ENCODE measurements at regions of chr15 and their contacts with region 1.

Region 1: GRCh38 chr15:61186905-61187741 is 42.0 kb downstream of the RORA start:
- DNase-seq: peak; percentile 47 to 77
- ATAC-seq: peak; percentile 58 to 85 (median 74)
- H3K4me3 ChIP-seq: peak overlapping the region; percentile 54
- H3K27ac ChIP-seq: peak overlapping the region; percentile 72
- H3K4me1 ChIP-seq: peaks cover 41% of the 10 kb centered on the region
- H3K27me3 ChIP-seq: no peaks in the 10 kb centered on the region
- CTCF ChIP-seq: no peak

Region 2: GRCh38 chr15:61227269-61227949 is 40.3 kb after region 1 on chr15:
- intact Hi-C with region 1: loop called in 1 of 2 experiments (anchors 5 kb)
- DNase-seq: peak; percentile 24 to 57
- ATAC-seq: peak; percentile 32 to 77 (median 75)
- H3K4me3 ChIP-seq: peak overlapping the region; percentile 75
- H3K27ac ChIP-seq: peak overlapping the region; percentile 87
- H3K4me1 ChIP-seq: peaks cover 30% of the 10 kb centered on the region
- H3K27me3 ChIP-seq: no peaks in the 10 kb centered on the region
- CTCF ChIP-seq: no peak

Region 3: DNA sequence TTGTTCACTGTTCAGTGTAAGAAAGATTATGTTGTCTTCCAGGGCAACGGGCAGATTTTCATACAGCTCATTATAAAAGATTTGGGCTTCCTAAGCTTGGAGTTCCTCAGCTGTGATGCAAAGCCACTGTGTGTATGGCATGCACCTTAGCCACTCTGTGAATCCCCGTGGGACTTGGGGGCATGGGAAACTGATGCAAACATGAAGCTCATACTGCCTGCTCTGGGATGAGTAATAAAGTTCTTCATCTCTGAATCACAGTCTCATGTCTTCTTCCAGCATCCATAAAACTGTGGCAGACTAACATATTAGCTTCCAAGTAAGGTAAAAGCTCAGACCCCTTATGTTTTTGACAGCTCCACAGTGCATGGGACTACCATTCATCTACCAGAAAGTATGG is 196.3 kb after region 1 on chr15:
- intact Hi-C with region 1: no loop called
- DNase-seq: no peak
- ATAC-seq: no peak
- H3K4me3 ChIP-seq: no peak overlapping the region
- H3K27ac ChIP-seq: no peak overlapping the region
- H3K4me1 ChIP-seq: no peaks in the 10 kb centered on the region
- H3K27me3 ChIP-seq: no peaks in the 10 kb centered on the region
- CTCF ChIP-seq: no peak